Motor neuron (in vitro differentiated cells): ENCODE measurements at regions of chr1 and their contacts with region 1.

Region 1: DNA sequence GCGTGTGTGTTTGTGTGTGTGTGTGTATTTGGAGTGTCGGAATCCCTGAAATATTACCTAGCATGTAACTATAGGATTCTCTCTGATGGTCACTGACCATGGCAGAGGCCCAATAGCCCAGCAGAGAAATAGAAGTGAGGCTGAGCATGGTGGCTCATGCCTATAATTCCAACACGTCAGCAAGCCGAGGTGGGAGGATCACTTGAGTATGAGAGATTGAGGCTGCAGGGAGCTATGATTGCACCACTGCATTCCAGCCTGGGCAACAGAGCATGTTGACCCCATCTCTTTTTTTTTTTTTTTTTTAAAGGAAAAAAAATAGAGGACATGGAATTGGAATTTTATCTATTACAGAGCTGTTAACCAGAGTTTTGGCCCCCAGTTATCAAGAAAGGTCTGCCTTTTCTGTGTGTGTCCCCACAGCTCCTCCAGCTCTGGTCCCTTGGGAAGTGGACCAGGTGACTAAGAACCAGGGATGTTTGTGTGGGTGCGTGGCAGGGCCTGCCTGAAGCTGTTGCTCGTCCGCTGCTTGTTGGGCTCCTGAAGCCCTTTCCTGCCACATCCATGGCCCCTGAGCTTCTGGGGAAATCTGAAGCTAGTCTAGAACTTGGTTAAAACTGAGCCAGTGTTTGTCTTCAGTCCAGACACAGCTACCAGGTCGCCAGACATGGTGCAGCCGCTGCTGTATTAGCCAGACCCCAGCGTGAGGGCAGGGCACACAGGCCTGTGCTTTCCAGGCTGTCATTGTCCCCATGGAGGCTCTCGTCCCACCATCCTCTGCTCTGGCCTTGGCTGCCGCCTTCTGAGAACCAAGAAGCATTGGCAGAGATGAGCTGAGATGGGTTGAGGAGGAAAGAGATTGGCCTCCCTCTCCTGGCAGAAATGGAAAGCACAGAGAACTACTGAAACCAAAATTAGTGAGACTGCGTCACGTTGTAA is 25.5 kb downstream of the CAPN9 start:
- ATAC-seq: peak; percentile 42 to 91 (median 66)
- H3K4me3 ChIP-seq: no peak overlapping the region
- H3K27ac ChIP-seq: no peak overlapping the region
- H3K4me1 ChIP-seq: no peaks in the 10 kb centered on the region

Region 2: DNA sequence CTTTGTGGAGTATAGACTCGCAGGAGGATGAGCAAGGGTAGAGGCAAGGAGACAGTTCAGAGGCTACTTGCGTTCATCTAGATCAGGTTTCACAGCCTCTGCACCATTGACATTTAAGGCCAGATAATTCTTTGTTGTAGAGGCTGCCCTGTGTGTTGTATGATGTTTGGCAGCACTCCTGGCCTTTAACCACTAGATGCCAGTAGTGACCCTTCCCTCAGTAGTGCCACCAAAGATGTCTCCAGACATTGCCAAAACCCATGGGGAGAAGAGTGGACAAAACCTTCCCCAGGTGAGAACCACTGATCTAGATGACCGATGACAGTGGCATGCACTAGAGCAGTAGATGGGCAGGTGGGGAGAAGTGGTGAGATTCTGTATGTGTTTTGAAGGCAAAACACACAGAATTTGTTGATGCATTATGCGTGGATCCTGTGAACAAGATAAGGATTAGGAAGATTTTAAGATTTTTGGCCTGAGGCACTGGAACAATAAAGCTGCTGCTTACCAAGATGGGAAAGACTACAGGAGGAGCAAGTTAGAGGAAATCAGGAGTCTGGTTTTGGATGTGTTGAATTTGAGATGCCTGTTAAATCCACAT is 140.4 kb before region 1 on chr1:
- in situ Hi-C with region 1: loop called in 1 of 9 experiments (anchors 10 kb)
- ATAC-seq: peak in 6 of 8 experiments; percentile 45 to 98 (median 84)
- H3K4me3 ChIP-seq: no peak overlapping the region
- H3K27ac ChIP-seq: no peak overlapping the region
- H3K4me1 ChIP-seq: peaks cover 4 to 6% of the 10 kb centered on the region in 2 donors

Region 3: DNA sequence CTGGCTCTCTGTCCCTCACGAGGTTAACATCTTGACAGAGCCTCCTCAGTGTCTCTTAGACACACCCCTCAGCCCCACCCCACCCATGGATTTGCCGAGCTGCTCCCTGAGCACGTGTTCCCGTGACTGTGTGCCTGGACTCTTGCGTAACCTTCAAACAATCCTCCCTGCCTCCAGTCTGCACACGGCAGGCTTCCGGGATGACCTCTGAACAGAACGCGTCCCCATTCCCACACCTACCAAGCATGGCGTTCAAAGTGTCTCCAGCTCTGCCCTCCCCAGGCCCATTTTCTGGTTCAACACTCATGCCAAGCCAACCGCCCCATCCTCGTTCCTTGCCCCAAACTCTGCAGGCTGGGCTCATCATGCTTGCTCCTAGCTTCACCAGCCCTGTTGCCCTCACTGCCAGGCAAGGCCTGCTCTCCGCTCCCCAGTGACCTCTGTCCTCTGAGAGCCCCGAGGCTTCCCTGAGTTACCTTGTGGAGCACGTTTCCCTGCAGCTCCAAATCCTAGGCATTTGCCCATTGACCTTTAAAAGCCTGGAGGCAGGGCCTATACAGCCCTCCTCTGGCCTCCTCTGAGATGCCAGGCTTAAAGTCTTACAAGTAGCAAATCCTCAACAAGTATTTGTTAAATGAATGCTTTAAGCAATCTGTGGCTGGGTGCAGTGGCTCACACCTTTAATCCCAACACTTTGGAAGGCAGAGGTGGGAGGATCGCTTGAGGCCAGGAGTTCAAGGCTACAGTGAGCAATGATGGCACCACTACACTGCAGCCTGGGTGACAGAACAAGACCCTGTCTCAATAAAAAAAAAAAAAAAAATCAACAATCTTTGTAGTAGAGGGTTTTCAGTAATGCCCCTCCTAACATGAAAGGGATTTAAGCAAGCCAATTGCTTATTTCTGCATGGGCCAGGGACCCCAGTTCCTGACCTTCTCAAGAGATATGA is 63.8 kb before region 1 on chr1:
- in situ Hi-C with region 1: loop called in 1 of 9 experiments (anchors 10 kb)
- ATAC-seq: peak in 7 of 8 experiments; percentile 45 to 89 (median 70)
- H3K4me3 ChIP-seq: no peak overlapping the region
- H3K27ac ChIP-seq: no peak overlapping the region
- H3K4me1 ChIP-seq: peaks cover 2 to 7% of the 10 kb centered on the region in 2 donors

Region 4: DNA sequence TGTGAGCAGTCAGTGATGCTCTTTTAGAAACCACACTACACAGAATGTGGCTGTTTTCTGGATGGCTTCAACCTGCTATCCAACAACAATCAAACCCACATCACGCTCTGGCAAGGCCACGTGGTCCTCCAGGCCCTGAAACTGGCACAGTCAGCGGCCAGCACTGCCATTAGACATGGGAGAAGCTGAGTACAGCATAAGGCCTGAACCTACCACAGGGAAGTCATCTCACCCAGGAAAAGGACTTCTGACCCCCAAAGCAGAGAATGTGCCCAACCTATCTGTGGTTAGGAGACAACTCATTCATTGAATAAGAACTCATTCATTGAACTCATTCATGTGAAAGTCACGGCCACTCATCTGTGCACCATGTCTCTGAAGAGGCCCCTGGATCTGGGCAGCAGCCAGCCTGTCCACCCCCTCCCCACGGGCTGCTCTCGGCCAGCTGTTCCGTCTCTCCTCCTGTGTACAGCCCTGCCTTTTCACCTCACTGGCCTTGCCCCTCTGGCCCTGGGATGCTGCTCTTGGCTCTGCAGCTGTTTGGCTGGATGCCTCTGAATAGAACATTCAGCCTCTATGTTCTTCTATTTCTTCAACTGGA is 54.5 kb after region 1 on chr1:
- in situ Hi-C with region 1: no loop called
- ATAC-seq: peak in 4 of 8 experiments; percentile 7 to 43 (median 29)
- H3K4me3 ChIP-seq: no peak overlapping the region
- H3K27ac ChIP-seq: no peak overlapping the region
- H3K4me1 ChIP-seq: peaks cover 42 to 49% of the 10 kb centered on the region in 2 donors